ENCODE measurements at regions of chr3 and their contacts with region 1.

Region 1: DNA sequence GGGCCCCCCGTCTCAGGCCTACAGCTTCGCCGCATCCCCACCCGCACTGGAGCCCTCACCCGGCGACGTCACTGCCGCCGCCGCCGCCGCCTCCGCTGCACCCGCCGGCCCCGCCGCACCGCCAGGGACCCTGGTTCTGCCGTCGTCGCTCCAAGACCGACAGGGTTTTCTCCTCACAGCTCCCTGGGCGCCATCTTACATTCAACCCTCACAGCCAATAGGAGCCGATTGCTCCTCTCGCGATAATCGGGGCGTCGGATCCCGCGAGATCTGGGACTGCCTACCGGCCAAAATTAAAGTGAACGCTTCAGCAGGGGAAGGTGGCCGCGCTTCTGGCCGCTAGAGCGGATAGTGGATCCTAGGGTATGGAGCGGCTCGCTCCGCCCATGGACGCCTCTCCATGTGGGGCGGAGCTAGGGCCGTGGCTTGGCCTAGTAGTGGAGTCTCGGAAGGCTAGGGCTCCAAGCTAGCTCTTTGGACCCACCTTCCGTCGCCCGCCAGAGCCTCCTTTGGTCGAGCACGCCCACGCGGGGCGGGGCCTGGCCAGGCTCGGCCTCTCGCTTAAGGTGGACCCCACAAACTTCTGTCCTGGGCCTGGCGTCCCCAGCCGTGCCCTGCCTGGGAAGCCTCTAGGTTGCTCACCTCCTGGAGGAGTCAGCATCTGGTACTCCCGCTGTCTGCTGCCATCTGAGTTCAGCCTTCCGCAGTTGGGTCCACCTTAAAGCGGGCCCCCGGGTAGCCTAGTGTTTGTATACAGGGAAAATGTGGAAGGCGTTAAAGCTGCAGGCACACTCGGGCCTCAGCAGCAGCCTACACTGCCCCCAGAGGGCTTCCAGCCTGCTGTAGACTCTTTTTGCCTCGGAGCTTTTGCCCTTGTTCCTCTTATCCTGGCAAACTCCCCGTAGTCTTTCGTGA is at the start of gene QRICH1:
- DNase-seq: peak; percentile 99
- H3K4me3 Mint-ChIP-seq: peak within 1 kb of the TSS; percentile 94
- H3K27ac Mint-ChIP-seq: peak within 1 kb of the TSS; percentile 94
- H3K4me1 Mint-ChIP-seq: peaks cover 35% of the 10 kb centered on the region
- H3K27me3 Mint-ChIP-seq: no peaks in the 10 kb centered on the region
- total RNA-seq, gene QRICH1: 100 to 111 TPM

Region 2: GRCh38 chr3:48918388-48919214 is 175.5 kb before region 1 on chr3 and contains the start of gene ARIH2:
- CTCF ChIA-PET with region 1: no interaction called
- intact Hi-C with region 1: loop called (anchors 1 kb)
- DNase-seq: peak; percentile 89
- H3K4me3 Mint-ChIP-seq: peak within 1 kb of the TSS; percentile 98
- H3K27ac Mint-ChIP-seq: peak within 1 kb of the TSS; percentile 100
- H3K4me1 Mint-ChIP-seq: peaks cover 29% of the 10 kb centered on the region
- H3K27me3 Mint-ChIP-seq: no peaks in the 10 kb centered on the region
- total RNA-seq, gene ARIH2: 96.1 to 99.1 TPM

Region 3: DNA sequence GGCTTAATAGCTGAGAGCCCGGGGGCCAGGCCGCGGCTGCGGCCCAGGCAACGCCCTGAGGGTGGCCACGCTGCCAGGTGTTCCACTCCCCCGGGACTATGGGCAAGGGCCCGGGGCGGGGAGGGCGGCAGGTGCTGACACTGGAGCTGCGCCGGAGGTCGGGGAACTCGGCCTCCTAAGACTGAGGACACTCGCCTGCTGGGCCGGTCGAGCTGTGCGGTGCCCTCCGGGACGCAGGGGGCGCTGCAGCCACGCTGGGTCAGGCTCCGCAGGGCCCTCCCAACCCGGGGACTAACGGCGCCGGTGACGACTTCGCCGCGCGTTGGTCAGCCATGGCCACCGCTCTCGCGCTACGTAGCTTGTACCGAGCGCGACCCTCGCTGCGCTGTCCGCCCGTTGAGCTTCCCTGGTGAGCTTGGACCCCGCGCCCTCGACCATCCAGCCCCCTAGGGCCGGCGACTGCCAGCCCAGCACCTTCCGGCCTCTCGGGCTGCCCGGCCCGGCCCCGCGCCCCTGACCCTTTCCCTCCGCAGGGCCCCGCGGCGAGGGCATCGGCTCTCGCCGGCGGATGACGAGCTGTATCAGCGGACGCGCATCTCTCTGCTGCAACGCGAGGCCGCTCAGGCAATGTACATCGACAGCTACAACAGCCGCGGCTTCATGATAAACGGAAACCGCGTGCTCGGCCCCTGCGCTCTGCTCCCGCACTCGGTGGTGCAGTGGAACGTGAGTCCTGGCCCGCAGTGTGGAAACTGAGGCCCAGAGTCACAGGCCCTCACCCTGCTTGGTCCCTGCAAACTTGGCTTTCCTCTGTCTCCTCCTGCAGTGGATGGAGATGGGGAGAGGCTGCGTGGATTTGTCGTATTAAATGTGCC is 72.1 kb before region 1 on chr3 and contains the start of gene NDUFAF3:
- CTCF ChIA-PET with region 1: interaction called, 19 read pairs
- intact Hi-C with region 1: loop called (anchors 1 kb)
- DNase-seq: peak; percentile 95
- H3K4me3 Mint-ChIP-seq: peak within 1 kb of the TSS; percentile 96
- H3K27ac Mint-ChIP-seq: peak within 1 kb of the TSS; percentile 97
- H3K4me1 Mint-ChIP-seq: peaks cover 60% of the 10 kb centered on the region
- H3K27me3 Mint-ChIP-seq: no peaks in the 10 kb centered on the region
- total RNA-seq, gene NDUFAF3: 113 to 115 TPM

Region 4: DNA sequence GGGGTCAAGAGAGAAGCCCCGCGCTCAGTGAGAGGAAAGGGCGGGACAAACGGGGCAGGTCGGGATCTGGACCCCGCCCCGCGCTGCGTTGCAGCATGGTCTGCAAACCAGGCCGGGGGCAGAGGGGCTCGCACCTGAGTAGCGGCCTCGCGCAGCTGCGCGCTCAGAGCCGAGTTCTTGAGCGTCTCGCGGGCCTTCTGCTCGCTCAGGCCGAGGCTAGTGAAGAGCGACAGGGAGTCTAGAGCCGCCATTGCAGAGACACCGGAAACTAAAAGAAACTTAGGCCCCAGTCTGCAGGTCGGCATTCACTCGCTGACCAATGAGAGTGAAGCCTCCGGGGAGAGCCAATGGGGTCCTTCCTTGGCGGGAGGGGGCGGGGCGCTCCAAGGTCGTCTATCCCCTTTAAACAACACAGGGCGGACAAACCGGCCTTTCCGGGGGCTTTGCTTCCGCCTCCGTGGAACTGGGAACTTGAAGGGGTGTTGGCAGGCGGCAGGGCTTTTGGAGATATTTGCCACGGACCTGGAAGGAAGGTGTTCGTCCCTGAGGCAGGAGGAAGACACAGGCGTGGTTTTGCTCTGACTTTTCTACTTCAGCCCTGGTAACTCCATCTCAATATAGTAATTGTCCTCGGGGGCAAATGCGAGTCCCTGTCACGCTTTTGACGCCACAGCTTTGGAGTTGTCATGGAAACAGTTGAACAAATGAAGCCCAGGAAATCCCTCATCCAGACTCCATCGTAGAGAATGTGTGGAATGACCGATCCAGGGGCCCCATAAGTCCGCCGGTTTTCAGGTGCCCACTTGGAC is 10.6 kb after region 1 on chr3 and contains the start of gene QARS1:
- CTCF ChIA-PET with region 1: interaction called, 12 read pairs
- intact Hi-C with region 1: loop called (anchors 1 kb)
- DNase-seq: peak; percentile 94
- H3K4me3 Mint-ChIP-seq: peak within 1 kb of the TSS; percentile 97
- H3K27ac Mint-ChIP-seq: peak within 1 kb of the TSS; percentile 85
- H3K4me1 Mint-ChIP-seq: peaks cover 26% of the 10 kb centered on the region
- H3K27me3 Mint-ChIP-seq: no peaks in the 10 kb centered on the region
- total RNA-seq, gene QARS1: 265 to 281 TPM

Region 5: GRCh38 chr3:49171119-49171774 is 77.1 kb after region 1 on chr3 and contains the start of gene KLHDC8B:
- CTCF ChIA-PET with region 1: interaction called, 8 read pairs
- intact Hi-C with region 1: loop called (anchors 2 kb)
- DNase-seq: peak; percentile 88
- H3K4me3 Mint-ChIP-seq: peak within 1 kb of the TSS; percentile 67
- H3K27ac Mint-ChIP-seq: no peak within 1 kb of the TSS
- H3K4me1 Mint-ChIP-seq: peaks cover 9% of the 10 kb centered on the region
- H3K27me3 Mint-ChIP-seq: no peaks in the 10 kb centered on the region
- total RNA-seq, gene KLHDC8B: 1.8 to 2.4 TPM

Region 6: DNA sequence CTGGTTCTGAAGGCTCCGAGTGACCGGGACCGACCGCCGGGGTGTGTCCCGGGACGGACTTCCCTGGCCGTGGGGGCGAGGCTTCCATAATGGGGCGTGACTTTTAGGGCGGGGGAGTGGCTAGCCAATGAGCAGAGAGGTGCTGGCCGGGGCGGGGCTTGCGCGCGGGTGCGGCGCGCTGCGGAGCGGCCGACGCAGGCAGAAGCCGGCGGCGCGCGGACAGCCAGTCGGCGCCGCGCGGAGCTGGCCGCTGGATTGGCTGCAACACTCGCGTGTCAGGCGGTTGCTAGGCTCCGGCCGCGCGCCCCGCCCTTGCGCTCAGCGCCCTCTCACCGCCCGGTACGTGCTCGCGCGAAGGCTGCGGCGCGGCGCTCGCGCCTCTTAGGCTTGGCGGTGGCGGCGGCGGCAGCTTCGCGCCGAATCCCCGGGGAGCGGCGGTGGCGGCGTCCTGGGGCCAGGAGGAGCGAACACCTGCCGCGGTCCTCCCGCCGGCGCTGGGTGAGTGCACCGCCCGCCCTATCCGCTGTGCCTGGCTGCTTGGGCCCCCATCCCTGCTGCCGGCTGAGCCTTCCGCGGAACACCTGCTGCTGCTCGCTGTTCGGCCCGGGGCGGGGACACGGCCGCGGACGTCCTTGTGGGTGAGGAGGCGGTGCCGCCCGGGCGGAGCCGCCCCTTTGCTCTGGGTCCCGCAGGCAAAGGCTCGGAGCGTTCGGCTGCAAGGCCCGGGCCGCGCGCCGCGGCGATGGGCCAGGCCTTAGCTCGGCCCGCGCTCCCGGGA is 376.0 kb after region 1 on chr3 and contains the start of gene DAG1:
- CTCF ChIA-PET with region 1: no interaction called
- intact Hi-C with region 1: loop called (anchors 1 kb)
- DNase-seq: peak; percentile 97
- H3K4me3 Mint-ChIP-seq: peak within 1 kb of the TSS; percentile 83
- H3K27ac Mint-ChIP-seq: peak within 1 kb of the TSS; percentile 85
- H3K4me1 Mint-ChIP-seq: peaks cover 14% of the 10 kb centered on the region
- H3K27me3 Mint-ChIP-seq: no peaks in the 10 kb centered on the region
- total RNA-seq, gene DAG1: 6.9 to 8.2 TPM